ENCODE measurements at regions of chr5 and their contacts with region 1.

Region 1: DNA sequence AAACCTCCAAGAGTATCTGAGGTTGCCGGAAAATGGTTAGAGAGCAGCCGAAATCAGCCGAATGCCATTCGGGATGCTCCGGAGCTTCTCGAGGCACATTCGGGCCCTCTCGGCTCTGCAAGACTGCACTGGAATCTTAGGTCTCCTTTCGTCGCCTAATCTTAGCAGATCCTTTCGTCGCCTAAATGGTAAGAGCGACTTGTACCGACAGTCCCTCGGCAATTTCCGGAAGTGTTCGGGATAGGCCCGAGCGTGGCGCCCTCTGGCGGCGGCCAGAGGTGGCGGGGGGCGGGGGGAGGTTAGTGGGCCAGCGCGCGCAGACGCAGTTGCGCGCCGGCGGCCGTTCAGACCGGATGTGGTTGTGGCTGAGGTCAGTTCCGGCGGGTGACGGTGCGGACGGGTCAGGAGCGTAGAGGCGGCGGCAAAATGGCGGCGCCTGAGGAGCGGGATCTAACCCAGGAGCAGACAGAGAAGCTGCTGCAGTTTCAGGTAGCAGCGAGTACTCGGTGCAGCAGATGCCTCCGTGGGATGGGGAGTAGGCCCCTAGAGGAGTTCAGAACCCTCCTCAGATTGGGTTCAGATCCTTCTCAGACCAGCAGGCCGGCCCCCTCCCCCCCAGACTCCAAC is at the start of gene FAF2:
- DNase-seq: peak; percentile 99
- H3K4me3 Mint-ChIP-seq: peak within 1 kb of the TSS; percentile 96
- H3K27ac Mint-ChIP-seq: peak within 1 kb of the TSS; percentile 99
- H3K4me1 Mint-ChIP-seq: peaks cover 23% of the 10 kb centered on the region
- H3K27me3 Mint-ChIP-seq: no peaks in the 10 kb centered on the region
- total RNA-seq, gene FAF2: 39.4 and 44.1 TPM in 2 replicates

Region 2: DNA sequence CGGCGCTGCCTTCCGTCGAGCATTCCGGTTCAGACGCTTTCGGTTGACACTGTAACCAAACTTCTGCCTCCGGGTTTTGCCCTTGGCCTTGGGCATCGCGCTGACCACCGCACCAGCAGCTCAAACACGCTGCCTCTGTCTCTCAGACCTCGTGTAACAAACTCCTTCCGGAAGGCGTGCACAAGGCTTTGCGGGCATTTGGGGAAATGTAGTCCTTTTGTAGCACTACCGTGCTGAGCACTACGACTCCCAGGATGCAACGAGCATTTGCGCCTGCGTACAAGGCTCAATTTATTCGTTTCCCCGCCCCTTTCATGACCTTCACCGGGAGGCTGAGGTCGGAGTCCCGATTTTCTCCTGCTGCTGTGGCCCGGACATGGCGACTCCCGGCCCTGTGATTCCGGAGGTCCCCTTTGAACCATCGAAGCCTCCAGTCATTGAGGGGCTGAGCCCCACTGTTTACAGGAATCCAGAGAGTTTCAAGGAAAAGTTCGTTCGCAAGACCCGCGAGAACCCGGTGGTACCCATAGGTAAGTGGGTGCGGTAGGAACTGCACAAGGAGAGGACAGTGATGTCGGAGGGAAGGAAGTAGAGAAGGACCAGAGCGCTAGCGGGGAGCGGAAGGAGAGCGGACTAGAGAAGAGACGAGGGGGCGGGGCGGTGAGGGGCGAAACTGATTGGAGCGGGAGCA is 59.5 kb before region 1 on chr5 and contains the starts of genes HIGD2A and NOP16:
- intact Hi-C with region 1: loop called (anchors 1 kb)
- DNase-seq: peak; percentile 98
- H3K4me3 Mint-ChIP-seq: peak within 1 kb of the TSS; percentile 97
- H3K27ac Mint-ChIP-seq: peak within 1 kb of the TSS; percentile 99
- H3K4me1 Mint-ChIP-seq: peaks cover 21% of the 10 kb centered on the region
- H3K27me3 Mint-ChIP-seq: no peaks in the 10 kb centered on the region
- total RNA-seq, gene HIGD2A: 102 and 105 TPM in 2 replicates
- total RNA-seq, gene NOP16: 79.6 and 84.0 TPM in 2 replicates

Region 3: DNA sequence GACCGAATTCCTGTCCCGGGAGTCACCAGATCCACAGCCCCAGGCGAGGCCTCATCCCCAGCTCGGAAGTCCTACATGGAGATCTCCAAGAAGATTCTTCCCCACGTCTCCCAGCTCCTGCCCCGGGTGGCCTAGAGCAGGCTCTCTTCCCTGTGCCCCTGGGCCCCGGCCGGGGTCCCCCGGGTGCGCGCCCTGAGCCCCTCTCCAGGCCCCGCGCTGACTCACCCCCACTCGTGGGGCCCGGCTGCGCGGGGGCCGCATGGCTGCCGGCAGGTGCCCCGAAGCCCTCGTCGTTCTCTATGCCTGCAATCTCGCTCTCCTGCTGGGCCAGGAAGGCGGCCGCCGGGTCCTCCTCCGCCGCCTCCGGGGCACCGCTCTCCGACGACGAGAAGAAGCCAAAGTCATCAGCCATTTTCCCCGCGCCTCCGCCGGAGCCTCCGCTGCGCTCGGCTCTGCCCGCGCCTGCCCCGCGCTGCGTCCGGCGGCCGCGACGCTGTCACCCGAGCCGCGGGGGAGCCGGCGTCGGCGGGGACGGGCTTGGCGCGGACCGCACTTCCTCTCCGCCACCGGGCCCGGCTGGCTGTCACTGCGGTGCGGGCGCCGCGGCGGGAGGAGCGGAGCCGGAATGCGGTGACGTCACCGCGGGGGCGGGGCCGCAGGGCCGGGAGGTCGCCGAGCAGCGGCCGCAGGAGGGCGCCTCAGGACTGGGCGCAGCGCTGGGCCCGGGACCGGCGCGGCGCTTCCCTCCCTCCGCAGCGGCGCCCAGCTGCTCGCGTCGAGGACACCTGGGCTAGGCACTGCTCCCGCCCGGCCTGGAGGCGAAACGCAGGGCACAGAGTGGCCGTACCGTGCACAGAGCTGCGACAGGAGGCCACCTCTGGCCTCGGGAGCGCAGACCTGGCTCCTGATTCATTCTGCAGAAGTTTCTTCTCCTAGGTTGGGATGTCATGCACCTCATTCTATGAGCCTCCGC is 31.9 kb before region 1 on chr5 and contains the start of gene CLTB:
- intact Hi-C with region 1: loop called (anchors 1 kb)
- DNase-seq: peak; percentile 75
- H3K4me3 Mint-ChIP-seq: peak within 1 kb of the TSS; percentile 82
- H3K27ac Mint-ChIP-seq: peak within 1 kb of the TSS; percentile 62
- H3K4me1 Mint-ChIP-seq: peaks cover 24% of the 10 kb centered on the region
- H3K27me3 Mint-ChIP-seq: peaks cover 13% of the 10 kb centered on the region
- total RNA-seq, gene CLTB: 47.9 and 57.9 TPM in 2 replicates

Region 4: GRCh38 chr5:176436661-176437071 is 11.4 kb before region 1 on chr5:
- intact Hi-C with region 1: loop called (anchors 1 kb)
- DNase-seq: peak; percentile 24
- H3K4me3 Mint-ChIP-seq: peak overlapping the region; percentile 58
- H3K27ac Mint-ChIP-seq: peak overlapping the region; percentile 43
- H3K4me1 Mint-ChIP-seq: peaks cover 19% of the 10 kb centered on the region
- H3K27me3 Mint-ChIP-seq: peaks cover 9% of the 10 kb centered on the region

Region 5: DNA sequence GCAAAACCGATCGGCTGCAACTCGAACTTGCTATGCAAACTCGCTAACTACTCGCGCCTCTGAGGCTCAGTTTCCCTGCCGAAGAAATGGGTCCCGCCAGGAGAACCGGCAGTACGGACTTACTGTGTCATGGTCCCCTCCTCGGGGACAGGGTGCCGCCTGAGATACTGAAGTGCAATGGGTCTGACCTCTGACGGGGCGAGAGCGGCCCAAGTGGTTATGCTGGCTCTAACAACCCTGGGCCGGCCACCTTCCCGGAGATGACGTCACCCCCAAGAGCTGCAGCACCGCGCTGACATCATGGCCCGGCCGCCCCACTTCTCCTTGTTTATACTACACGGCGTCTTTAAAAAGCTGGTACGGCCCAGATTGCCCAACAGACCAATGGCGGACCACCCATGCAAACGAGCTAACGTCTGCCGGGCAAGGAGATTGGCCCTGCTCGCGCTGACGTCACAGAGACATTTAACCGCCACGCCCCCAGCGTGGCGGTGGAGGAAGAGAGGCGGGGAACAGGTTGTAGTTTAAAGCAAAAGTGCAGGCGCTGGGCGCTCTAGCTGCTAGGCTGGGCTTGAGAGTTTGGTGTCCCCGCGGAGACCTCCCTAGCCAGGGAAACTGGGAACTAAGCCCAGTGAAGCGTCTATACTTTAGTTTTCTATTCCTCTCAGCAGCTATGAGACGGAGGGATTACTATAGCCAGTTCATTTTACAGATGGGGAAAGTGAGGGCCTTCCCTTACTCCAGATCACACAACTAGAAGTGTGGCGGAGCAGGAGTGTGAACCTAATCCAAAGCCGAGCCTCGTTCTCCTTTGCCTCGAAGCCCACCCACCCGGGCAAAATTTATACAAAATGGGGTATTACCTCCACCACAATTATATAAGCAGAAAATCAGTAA is 89.8 kb after region 1 on chr5:
- intact Hi-C with region 1: loop called (anchors 1 kb)
- DNase-seq: peak; percentile 98
- H3K4me3 Mint-ChIP-seq: peak overlapping the region; percentile 98
- H3K27ac Mint-ChIP-seq: peak overlapping the region; percentile 96
- H3K4me1 Mint-ChIP-seq: peaks cover 58% of the 10 kb centered on the region
- H3K27me3 Mint-ChIP-seq: no peaks in the 10 kb centered on the region

Region 6: DNA sequence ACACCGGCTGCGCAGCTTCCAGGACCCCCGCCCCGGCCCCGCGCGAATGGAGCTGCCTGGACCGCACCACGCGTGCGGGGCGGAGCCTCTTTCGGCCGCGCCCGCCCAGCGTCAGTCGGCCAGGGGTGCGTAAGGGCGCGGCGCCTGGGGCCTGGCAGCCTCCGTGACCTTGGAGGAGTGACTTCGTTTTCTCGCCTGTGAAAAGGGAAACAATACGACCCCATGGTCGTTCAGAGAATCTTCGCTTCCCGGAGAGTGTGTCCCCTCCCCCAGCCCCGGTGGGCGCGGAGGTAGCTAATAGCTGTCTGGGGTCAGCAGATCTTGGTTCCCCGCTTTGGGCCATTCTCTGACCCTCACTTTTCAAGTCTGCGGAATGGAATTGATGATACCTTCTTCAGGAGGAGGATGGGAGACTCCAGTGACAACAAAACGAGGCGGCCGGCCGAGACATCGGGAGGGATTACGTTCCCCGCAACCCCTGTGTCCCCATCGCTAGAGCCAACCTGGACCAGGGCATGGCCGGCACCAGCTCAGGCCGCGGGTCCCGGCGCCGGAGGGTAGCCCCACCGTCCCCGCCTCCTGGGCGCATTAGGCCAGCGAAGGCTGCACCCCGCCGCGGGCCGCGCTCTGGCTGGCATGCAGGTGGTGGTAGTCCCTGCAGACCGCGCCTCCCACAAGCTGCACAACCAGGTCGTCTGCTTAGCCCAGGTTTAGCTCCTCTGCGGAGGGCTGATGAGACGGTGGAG is 95.5 kb after region 1 on chr5:
- intact Hi-C with region 1: loop called (anchors 1 kb)
- DNase-seq: peak; percentile 75
- H3K4me3 Mint-ChIP-seq: peak overlapping the region; percentile 91
- H3K27ac Mint-ChIP-seq: peak overlapping the region; percentile 95
- H3K4me1 Mint-ChIP-seq: peaks cover 40% of the 10 kb centered on the region
- H3K27me3 Mint-ChIP-seq: no peaks in the 10 kb centered on the region